ENCODE measurements at regions of chr17 and their contacts with region 1.

Region 1: GRCh38 chr17:80575057-80575875 is 30.6 kb downstream of the RPTOR start:
- DNase-seq: peak; percentile 93
- ATAC-seq: peak; percentile 97 to 98
- H3K4me3 ChIP-seq: no peak overlapping the region
- H3K27ac ChIP-seq: no peak overlapping the region
- H3K4me1 ChIP-seq: no peaks in the 10 kb centered on the region
- H3K27me3 ChIP-seq: no peaks in the 10 kb centered on the region
- CTCF ChIP-seq: peak; percentile 100

Region 2: GRCh38 chr17:80426681-80427326 is 148.5 kb before region 1 on chr17:
- intact Hi-C with region 1: loop called (anchors 10 kb)
- DNase-seq: peak; percentile 81
- ATAC-seq: peak; percentile 87 to 91
- H3K4me3 ChIP-seq: no peak overlapping the region
- H3K27ac ChIP-seq: no peak overlapping the region
- H3K4me1 ChIP-seq: peaks cover 7% of the 10 kb centered on the region
- H3K27me3 ChIP-seq: no peaks in the 10 kb centered on the region
- CTCF ChIP-seq: peak; percentile 99